ENCODE measurements at regions of chr19 and their contacts with region 1.

Region 1: GRCh38 chr19:35140962-35141637 is 2.0 kb upstream of the FXYD7 start:
- DNase-seq: peak; percentile 99
- ATAC-seq: peak; percentile 93
- H3K4me3 Mint-ChIP-seq: peak overlapping the region; percentile 75
- H3K27ac Mint-ChIP-seq: peak overlapping the region; percentile 65
- H3K4me1 Mint-ChIP-seq: peaks cover 31% of the 10 kb centered on the region
- H3K27me3 Mint-ChIP-seq: peaks cover 8% of the 10 kb centered on the region

Region 2: GRCh38 chr19:35013031-35013819 is 127.9 kb before region 1 on chr19:
- CTCF ChIA-PET with region 1: no interaction called
- POLR2A ChIA-PET with region 1: no interaction called
- intact Hi-C with region 1: no loop called
- DNase-seq: peak; percentile 89
- ATAC-seq: peak; percentile 86
- H3K4me3 Mint-ChIP-seq: peak overlapping the region; percentile 39
- H3K27ac Mint-ChIP-seq: peak overlapping the region; percentile 77
- H3K4me1 Mint-ChIP-seq: peaks cover 65% of the 10 kb centered on the region
- H3K27me3 Mint-ChIP-seq: no peaks in the 10 kb centered on the region

Region 3: DNA sequence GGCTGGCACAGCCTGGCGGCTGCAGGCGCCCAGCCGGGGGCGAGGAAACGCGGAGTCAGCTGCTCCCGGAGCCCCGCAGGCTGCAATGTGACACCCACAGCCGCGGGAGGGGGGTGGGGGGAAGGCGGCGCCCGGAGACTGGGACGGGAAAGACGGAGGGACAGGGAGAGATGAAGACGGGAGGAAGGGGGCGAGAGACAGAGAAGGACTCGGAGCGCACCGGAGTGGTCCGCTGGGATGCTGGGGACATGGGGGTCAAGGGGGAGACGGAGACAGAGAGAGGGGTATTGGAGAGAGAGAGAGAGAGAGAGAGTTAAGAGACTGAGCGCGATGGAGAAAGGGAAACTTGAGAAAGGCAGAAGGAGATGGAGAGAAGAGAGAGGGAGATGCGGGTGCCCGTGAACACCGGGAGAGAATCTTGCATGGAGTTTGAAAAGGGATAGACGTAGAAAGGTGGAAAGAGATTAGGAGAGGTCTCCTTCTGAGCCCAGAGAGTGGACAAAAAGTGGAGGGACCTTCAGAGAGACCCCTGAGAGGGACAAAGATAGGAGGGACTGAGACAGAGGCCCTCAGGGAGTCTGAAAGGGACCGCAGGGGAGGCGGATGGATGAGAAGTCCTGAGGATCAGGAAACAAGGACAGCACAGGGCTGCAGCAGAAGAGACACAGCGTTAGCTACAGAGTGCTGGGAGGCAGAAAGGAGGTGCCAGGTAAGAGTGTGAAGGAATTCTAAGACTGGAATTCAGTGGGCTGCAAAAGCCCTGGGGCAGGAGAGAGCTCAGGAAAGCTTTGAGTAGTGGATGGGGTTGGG is 109.8 kb before region 1 on chr19:
- CTCF ChIA-PET with region 1: no interaction called
- POLR2A ChIA-PET with region 1: no interaction called
- intact Hi-C with region 1: no loop called
- DNase-seq: no peak
- ATAC-seq: no peak
- H3K4me3 Mint-ChIP-seq: peak overlapping the region; percentile 68
- H3K27ac Mint-ChIP-seq: no peak overlapping the region
- H3K4me1 Mint-ChIP-seq: peaks cover 6% of the 10 kb centered on the region
- H3K27me3 Mint-ChIP-seq: peaks cover 22% of the 10 kb centered on the region

Region 4: GRCh38 chr19:35066691-35067563 is 74.2 kb before region 1 on chr19:
- CTCF ChIA-PET with region 1: interaction called, 30 read pairs
- POLR2A ChIA-PET with region 1: no interaction called
- intact Hi-C with region 1: loop called in 1 of 2 experiments (anchors 1 kb)
- DNase-seq: peak; percentile 96
- ATAC-seq: peak; percentile 89
- H3K4me3 Mint-ChIP-seq: peak overlapping the region; percentile 39
- H3K27ac Mint-ChIP-seq: peak overlapping the region; percentile 62
- H3K4me1 Mint-ChIP-seq: peaks cover 17% of the 10 kb centered on the region
- H3K27me3 Mint-ChIP-seq: no peaks in the 10 kb centered on the region

Region 5: GRCh38 chr19:35090506-35091237 is 50.4 kb before region 1 on chr19:
- CTCF ChIA-PET with region 1: no interaction called
- POLR2A ChIA-PET with region 1: no interaction called
- intact Hi-C with region 1: no loop called
- DNase-seq: peak; percentile 65
- ATAC-seq: peak; percentile 88
- H3K4me3 Mint-ChIP-seq: no peak overlapping the region
- H3K27ac Mint-ChIP-seq: no peak overlapping the region
- H3K4me1 Mint-ChIP-seq: peaks cover 4% of the 10 kb centered on the region
- H3K27me3 Mint-ChIP-seq: peaks cover 6% of the 10 kb centered on the region

Region 6: GRCh38 chr19:35124098-35125060 is 16.7 kb before region 1 on chr19:
- CTCF ChIA-PET with region 1: interaction called, 12 read pairs
- POLR2A ChIA-PET with region 1: no interaction called
- intact Hi-C with region 1: loop called in 1 of 2 experiments (anchors 1 kb)
- DNase-seq: peak; percentile 93
- ATAC-seq: peak; percentile 99
- H3K4me3 Mint-ChIP-seq: peak overlapping the region; percentile 72
- H3K27ac Mint-ChIP-seq: peak overlapping the region; percentile 20
- H3K4me1 Mint-ChIP-seq: peaks cover 13% of the 10 kb centered on the region
- H3K27me3 Mint-ChIP-seq: no peaks in the 10 kb centered on the region

Region 7: GRCh38 chr19:35213663-35214632 is 72.8 kb after region 1 on chr19:
- CTCF ChIA-PET with region 1: interaction called, 4 read pairs
- POLR2A ChIA-PET with region 1: no interaction called
- intact Hi-C with region 1: loop called in 1 of 2 experiments (anchors 1 kb)
- DNase-seq: peak; percentile 88
- ATAC-seq: peak; percentile 67
- H3K4me3 Mint-ChIP-seq: peak overlapping the region; percentile 41
- H3K27ac Mint-ChIP-seq: peak overlapping the region; percentile 96
- H3K4me1 Mint-ChIP-seq: peaks cover 65% of the 10 kb centered on the region
- H3K27me3 Mint-ChIP-seq: no peaks in the 10 kb centered on the region

Region 8: GRCh38 chr19:35269421-35270117 is 128.5 kb after region 1 on chr19:
- CTCF ChIA-PET with region 1: interaction called, 3 read pairs
- POLR2A ChIA-PET with region 1: no interaction called
- intact Hi-C with region 1: loop called in 1 of 2 experiments (anchors 1 kb)
- DNase-seq: peak; percentile 88
- ATAC-seq: peak; percentile 68
- H3K4me3 Mint-ChIP-seq: peak overlapping the region; percentile 63
- H3K27ac Mint-ChIP-seq: peak overlapping the region; percentile 63
- H3K4me1 Mint-ChIP-seq: peaks cover 20% of the 10 kb centered on the region
- H3K27me3 Mint-ChIP-seq: no peaks in the 10 kb centered on the region

Region 9: GRCh38 chr19:35740423-35741202 is 599.5 kb after region 1 on chr19:
- CTCF ChIA-PET with region 1: no interaction called
- POLR2A ChIA-PET with region 1: no interaction called
- intact Hi-C with region 1: loop called in 1 of 2 experiments (anchors 10 kb)
- DNase-seq: peak; percentile 99
- ATAC-seq: peak; percentile 67
- H3K4me3 Mint-ChIP-seq: peak overlapping the region; percentile 82
- H3K27ac Mint-ChIP-seq: peak overlapping the region; percentile 96
- H3K4me1 Mint-ChIP-seq: peaks cover 28% of the 10 kb centered on the region
- H3K27me3 Mint-ChIP-seq: no peaks in the 10 kb centered on the region

Measured in activated CD4-positive, alpha-beta T cell treated with anti-CD3 and anti-CD28 coated beads for 36 hours (primary cell).